Activated CD8-positive, alpha-beta T cell treated with anti-CD3 and anti-CD28 coated beads, Interleukin-2, amount 10 ng/mL, durations not matched to agents 7 days and 5 days (primary cell): ENCODE measurements at regions of chr15 and their contacts with region 1.

Region 1: DNA sequence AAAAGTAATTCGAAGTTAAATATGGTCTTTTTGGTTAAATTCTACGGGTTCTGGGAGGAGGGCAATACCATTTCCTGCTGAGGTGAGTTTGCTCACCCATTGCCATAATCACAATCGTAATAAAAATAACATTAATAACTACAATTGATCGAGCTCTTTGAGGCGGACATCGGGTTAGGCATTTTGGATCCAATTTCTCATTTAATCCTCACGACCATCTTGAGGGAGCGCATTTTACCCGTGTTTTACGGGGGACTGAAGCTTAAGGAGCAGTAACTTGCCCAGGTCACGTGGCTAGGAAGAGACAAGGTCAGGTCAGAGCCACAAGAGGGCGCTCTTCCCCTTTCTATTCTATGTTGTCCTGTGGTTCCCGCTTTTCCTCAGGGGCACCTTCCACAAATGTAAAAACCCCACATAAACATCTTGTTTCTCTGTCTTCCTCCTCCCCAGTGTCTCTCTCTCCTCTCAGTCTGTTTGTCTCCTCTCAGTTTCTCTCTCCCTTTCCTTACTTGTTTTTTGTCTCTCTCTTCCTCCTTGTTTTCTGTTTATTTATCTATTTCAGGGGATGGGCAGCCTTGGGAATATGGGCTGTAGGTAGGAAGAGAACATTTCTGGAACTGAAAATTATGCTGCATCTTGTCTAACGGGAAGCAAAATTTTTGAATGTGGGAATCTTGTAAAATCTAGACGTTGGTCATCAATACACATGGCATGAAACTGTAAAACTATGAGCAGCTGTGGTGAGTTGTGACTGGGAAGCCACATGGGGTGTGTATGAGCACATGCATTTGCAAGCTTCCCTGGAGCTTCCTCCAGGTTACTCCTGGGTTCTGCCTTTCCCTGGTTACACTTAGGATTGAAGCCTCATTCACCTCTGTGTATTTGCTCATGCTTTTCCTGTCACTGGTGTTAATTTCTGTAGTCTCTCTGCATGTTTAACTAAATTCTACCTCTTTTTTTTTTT is 71.0 kb downstream of the SQOR start:
- DNase-seq: peak; percentile 83
- ATAC-seq: peak; percentile 91
- H3K4me3 Mint-ChIP-seq: peak overlapping the region; percentile 87
- H3K27ac Mint-ChIP-seq: peak overlapping the region; percentile 40
- H3K4me1 Mint-ChIP-seq: peaks cover 20% of the 10 kb centered on the region
- H3K27me3 Mint-ChIP-seq: peaks cover 22% of the 10 kb centered on the region

Region 2: GRCh38 chr15:45641374-45641781 is 64.4 kb before region 1 on chr15:
- CTCF ChIA-PET with region 1: interaction called, 10 read pairs
- POLR2A ChIA-PET with region 1: interaction called, 6 read pairs
- DNase-seq: no peak
- ATAC-seq: no peak
- H3K4me3 Mint-ChIP-seq: no peak overlapping the region
- H3K27ac Mint-ChIP-seq: no peak overlapping the region
- H3K4me1 Mint-ChIP-seq: peaks cover 73% of the 10 kb centered on the region
- H3K27me3 Mint-ChIP-seq: no peaks in the 10 kb centered on the region

Region 3: DNA sequence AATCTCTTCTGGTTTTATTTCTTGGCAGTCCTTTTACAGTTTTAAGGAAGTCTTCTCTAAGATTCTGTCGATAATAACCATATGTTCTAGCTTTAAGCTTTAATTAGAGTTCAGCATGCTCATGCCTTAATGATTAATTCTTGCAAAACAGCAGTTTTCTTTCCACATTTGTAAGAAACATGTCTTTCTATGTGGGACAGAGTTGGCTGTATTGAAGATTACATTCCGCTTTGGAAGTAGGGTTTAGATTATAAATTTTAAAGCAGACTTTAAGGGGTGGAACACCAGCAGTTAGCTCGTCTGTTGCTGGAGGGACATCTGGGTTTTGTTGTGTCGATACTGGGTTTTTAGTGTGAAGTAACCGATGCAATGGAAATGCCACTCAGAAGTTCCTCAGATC is 35.7 kb before region 1 on chr15:
- CTCF ChIA-PET with region 1: interaction called, 11 read pairs
- POLR2A ChIA-PET with region 1: no interaction called
- DNase-seq: no peak
- ATAC-seq: no peak
- H3K4me3 Mint-ChIP-seq: no peak overlapping the region
- H3K27ac Mint-ChIP-seq: no peak overlapping the region
- H3K4me1 Mint-ChIP-seq: no peaks in the 10 kb centered on the region
- H3K27me3 Mint-ChIP-seq: no peaks in the 10 kb centered on the region

Region 4: DNA sequence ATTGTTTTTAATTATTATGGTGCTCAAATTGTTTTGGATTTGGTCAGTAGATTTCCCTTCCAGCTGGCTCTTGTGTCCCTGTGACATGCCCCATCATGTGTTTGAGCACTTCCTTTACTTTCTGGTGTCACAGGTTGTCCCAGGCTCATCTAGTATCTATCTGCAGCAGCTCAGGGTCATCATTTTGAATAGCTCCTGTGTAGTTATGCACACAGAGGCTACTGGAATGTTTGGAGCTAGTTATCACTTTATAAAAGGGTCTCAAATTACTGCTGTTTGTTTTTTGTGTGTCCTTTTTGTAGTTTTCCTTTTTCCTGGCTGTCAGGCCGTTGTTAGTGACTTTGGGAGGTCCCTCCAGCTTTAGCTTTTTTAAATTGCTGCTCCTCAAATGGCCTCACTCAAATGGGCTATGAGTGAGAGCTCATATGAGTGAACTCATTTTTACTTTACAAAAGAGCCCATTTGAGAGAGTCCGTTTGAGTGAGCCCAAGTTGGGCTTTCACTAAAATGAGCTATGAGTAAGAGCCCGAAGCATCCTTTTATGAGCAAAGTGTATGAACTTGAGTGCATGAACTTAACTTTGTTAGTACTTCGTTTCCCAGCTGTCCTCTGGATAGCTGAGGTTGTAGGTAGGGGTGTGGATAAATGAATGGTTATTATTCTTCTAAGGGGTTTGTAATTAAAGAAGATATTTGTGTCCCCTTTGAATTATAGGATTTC is 27.2 kb before region 1 on chr15:
- CTCF ChIA-PET with region 1: interaction called, 11 read pairs
- POLR2A ChIA-PET with region 1: interaction called, 3 read pairs
- DNase-seq: no peak
- ATAC-seq: no peak
- H3K4me3 Mint-ChIP-seq: no peak overlapping the region
- H3K27ac Mint-ChIP-seq: no peak overlapping the region
- H3K4me1 Mint-ChIP-seq: no peaks in the 10 kb centered on the region
- H3K27me3 Mint-ChIP-seq: no peaks in the 10 kb centered on the region

Region 5: DNA sequence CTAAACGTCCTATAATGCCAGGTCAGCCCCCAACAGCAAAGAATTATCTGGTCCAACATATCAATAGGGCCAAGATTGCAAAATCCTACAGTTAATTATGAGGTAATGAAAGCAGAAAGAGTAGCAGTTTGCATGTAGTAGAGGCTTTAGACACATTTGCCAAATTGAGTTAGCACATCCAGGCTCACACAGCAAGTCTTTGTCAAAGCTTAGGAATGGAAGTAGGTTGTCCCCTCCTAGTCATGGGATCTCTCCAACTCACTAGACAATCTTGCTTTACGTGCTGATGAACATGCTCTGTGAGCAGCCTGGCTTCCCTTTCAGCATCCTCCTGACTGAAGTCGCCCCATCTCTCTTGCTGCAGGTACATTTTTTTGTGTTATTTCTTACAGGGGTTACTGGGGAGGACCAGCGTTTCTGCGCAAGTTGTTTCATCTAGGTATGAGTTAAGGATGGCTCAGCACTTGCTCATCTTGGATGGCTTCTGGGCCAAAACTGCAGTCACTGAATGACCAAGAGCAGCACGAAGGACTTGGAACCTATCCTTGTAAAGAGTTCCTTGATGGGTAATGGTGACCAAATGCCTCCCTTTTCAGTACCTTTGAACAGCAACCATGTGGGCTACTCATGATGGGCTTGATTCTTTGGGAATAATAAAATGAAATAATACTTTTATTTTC is 15.1 kb before region 1 on chr15:
- CTCF ChIA-PET with region 1: interaction called, 14 read pairs
- POLR2A ChIA-PET with region 1: no interaction called
- DNase-seq: no peak
- ATAC-seq: no peak
- H3K4me3 Mint-ChIP-seq: no peak overlapping the region
- H3K27ac Mint-ChIP-seq: no peak overlapping the region
- H3K4me1 Mint-ChIP-seq: no peaks in the 10 kb centered on the region
- H3K27me3 Mint-ChIP-seq: no peaks in the 10 kb centered on the region

Region 6: GRCh38 chr15:45790325-45790943 is 84.6 kb after region 1 on chr15:
- CTCF ChIA-PET with region 1: interaction called, 18 read pairs
- POLR2A ChIA-PET with region 1: no interaction called
- DNase-seq: peak; percentile 36
- ATAC-seq: no peak
- H3K4me3 Mint-ChIP-seq: no peak overlapping the region
- H3K27ac Mint-ChIP-seq: no peak overlapping the region
- H3K4me1 Mint-ChIP-seq: no peaks in the 10 kb centered on the region
- H3K27me3 Mint-ChIP-seq: peaks cover 15% of the 10 kb centered on the region

Region 7: GRCh38 chr15:45795440-45796069 is 89.8 kb after region 1 on chr15:
- CTCF ChIA-PET with region 1: interaction called, 18 read pairs
- POLR2A ChIA-PET with region 1: no interaction called
- DNase-seq: peak; percentile 29
- ATAC-seq: no peak
- H3K4me3 Mint-ChIP-seq: no peak overlapping the region
- H3K27ac Mint-ChIP-seq: no peak overlapping the region
- H3K4me1 Mint-ChIP-seq: no peaks in the 10 kb centered on the region
- H3K27me3 Mint-ChIP-seq: peaks cover 13% of the 10 kb centered on the region

Region 8: GRCh38 chr15:46127361-46127874 is 421.6 kb after region 1 on chr15:
- CTCF ChIA-PET with region 1: no interaction called
- POLR2A ChIA-PET with region 1: no interaction called
- DNase-seq: no peak
- ATAC-seq: no peak
- H3K4me3 Mint-ChIP-seq: no peak overlapping the region
- H3K27ac Mint-ChIP-seq: no peak overlapping the region
- H3K4me1 Mint-ChIP-seq: no peaks in the 10 kb centered on the region
- H3K27me3 Mint-ChIP-seq: no peaks in the 10 kb centered on the region